Colonic mucosa (tissue), 4 donors: ENCODE measurements at regions of chr2 and their contacts with region 1.

Region 1: DNA sequence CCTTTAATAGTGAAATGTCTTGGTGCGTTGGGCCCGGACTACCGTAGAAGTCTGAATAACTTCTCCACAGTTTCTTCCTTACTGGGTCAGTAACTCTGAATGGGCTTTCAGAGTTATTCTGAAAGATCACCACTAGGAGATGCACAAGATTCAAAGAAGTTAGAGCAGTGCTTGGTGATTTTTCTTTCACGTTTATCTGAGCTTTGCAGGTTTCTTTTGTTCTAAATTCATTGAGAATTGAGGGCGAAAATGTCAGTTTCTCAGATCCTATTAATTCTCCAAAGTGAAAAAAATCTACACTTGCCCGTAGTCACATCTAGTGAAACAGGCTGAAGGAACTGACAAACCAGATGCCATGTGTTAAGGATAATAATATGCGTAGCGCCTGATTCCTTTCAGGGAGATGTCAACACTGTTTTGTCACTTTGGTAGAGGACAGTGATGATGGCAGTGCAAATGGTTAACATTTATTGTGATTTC is 70.1 kb downstream of the QPCT start:
- DNase-seq: no peak
- H3K4me3 ChIP-seq: no peak overlapping the region
- H3K27ac ChIP-seq: no peak overlapping the region
- H3K4me1 ChIP-seq: no peaks in the 10 kb centered on the region
- H3K27me3 ChIP-seq: no peaks in the 10 kb centered on the region
- CTCF ChIP-seq: peak; percentile 74

Region 2: DNA sequence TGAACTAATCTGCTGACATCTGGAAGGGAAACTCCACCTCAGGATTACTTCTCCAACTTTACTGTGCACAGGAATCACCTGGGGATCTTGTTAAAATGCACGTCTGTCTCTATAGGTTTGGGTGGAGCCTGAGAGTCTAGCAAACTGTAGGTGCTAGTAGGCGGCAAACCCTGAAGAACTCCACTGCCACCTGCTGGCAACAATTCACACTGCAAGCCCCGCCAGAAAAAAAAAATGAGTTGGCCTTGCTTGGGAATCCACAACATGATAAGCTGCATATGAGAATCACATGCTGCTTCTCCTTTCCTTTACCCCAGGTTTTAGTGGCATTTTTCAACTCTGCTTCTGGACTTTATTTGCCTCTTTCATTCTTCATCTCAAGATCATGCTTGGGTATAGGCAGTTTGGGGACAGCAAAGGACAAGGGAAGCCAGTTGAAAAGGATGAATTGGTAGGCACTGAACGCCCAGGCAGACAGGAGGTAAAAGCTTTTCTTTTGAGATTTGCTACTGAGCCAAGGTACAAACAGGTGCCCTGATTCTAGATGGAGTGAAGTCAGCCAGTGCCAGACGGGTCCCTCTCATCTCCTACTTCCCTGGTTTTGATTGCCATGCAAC is 629.2 kb before region 1 on chr2:
- intact Hi-C with region 1: no loop called
- DNase-seq: peak; percentile 73
- H3K4me3 ChIP-seq: no peak overlapping the region
- H3K27ac ChIP-seq: no peak overlapping the region
- H3K4me1 ChIP-seq: no peaks in the 10 kb centered on the region
- H3K27me3 ChIP-seq: no peaks in the 10 kb centered on the region
- CTCF ChIP-seq: peak; percentile 99

Region 3: GRCh38 chr2:37523814-37524362 is 109.4 kb after region 1 on chr2:
- intact Hi-C with region 1: loop called (anchors 10 kb)
- DNase-seq: peak; percentile 27
- H3K4me3 ChIP-seq: no peak overlapping the region
- H3K27ac ChIP-seq: no peak overlapping the region
- H3K4me1 ChIP-seq: no peaks in the 10 kb centered on the region
- H3K27me3 ChIP-seq: no peaks in the 10 kb centered on the region
- CTCF ChIP-seq: no peak

Region 4: DNA sequence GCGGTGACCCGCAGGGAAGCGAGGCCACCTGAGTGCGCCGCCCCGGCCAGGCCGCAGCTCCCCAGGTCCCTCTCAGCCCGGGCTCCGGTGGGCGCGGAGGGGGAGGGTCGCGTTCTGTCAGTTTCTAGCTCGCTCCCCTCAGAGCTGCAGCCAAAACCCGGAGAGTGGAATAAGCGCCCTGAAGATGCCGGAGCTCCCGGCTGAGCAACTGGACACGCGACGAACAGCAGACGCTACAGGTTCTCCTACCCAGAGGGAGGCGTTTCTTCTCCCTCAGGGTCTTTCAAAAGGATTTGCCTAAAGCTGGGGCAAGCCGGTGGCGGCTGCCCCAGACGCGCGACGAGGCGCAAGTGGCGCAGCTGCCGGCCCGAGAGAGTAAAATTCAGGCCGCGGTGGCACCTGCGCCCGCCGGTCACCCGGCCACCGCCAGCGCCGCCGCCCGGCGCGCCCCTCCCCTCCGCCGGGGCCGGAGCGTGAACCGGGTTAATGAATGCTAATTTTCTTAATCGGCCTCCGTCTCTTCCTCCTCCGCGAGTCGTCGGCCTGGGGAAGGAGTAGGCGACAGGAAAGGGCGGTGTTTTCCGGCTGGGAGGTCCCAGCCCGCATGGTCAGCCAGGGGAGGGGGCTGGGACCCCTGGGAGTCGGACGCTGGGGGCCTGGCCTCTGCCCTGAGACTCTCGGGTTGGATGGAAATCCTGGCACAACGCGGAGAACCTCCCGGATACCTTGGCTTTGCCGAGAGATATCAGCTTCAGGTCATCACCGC is 257.8 kb after region 1 on chr2:
- intact Hi-C with region 1: loop called (anchors 10 kb)
- DNase-seq: peak; percentile 81
- H3K4me3 ChIP-seq: peak overlapping the region; percentile 85
- H3K27ac ChIP-seq: peak overlapping the region; percentile 92
- H3K4me1 ChIP-seq: peaks cover 6% of the 10 kb centered on the region
- H3K27me3 ChIP-seq: no peaks in the 10 kb centered on the region
- CTCF ChIP-seq: no peak

Region 5: DNA sequence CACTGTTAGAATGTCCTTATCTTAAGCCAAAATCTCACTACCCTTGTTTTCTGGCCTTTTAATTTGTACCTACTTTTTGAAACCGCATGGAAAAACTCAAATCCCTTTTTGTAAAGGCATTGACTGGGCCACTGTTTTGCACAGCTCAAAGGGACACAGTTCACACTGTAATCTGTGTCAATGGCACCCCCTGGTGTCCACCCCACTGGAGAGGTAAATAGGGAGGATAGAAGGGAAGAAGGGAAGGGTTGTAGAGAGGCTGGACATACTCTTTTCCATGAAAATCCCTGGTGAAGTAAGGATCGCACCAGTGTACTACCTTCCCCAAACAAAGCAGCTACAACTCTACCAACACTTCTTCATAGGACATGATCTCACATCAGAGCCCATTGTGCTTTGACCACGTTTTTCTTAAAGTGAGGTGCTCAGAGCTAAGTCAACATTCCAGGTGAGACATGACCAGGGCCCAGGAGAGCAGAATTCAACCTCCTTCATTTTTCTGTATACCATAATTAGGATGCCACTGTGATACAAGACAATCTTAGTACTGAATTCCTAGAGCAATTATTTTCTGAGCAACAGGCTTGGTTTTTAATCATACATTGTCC is 418.2 kb after region 1 on chr2:
- intact Hi-C with region 1: loop called (anchors 2 kb)
- DNase-seq: peak; percentile 94
- H3K4me3 ChIP-seq: no peak overlapping the region
- H3K27ac ChIP-seq: no peak overlapping the region
- H3K4me1 ChIP-seq: no peaks in the 10 kb centered on the region
- H3K27me3 ChIP-seq: no peaks in the 10 kb centered on the region
- CTCF ChIP-seq: peak; percentile 71

Region 6: DNA sequence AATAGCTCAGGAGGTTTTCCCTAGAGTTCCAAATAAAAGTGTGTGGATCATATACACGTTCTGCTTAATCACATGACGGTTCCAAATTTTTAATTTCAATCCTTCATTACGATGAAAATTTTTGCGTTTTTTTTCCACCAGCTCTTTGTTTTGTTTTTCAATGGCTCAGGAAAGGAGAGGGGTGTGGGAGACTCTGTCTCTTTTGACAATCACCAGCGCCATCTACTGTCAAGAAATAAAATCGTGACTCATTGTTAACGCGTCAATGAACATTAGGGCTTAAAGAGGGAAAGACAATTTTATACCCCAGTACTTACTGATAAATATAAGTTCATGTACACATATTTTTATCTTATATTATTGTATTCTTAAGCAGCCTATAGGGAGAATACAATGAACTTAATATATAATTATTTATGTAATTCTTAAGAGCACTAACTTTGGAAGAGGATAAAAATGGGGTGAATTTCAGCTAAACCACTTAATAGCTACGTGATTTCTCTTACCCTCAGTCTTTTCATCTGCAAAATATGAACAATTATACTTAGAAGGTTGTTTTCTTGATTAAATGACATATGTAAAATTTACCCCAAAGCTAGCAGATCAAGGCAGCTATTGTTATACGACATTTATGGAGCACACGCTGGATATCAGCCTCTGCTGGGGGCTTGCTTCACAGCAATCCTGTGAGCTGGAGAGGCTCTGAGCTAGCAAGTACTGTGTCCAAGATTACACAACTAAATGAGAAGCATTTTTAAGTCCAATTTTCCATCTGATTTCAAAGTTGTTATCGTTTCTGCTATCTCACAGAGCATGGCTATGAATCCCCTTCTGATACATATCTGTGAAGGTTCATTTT is 463.2 kb after region 1 on chr2:
- intact Hi-C with region 1: loop called (anchors 5 kb)
- DNase-seq: peak; percentile 60
- H3K4me3 ChIP-seq: no peak overlapping the region
- H3K27ac ChIP-seq: no peak overlapping the region
- H3K4me1 ChIP-seq: no peaks in the 10 kb centered on the region
- H3K27me3 ChIP-seq: no peaks in the 10 kb centered on the region
- CTCF ChIP-seq: peak; percentile 67